PC-9 (cell line): ENCODE measurements at regions of chr1 and their contacts with region 1.

Region 1: DNA sequence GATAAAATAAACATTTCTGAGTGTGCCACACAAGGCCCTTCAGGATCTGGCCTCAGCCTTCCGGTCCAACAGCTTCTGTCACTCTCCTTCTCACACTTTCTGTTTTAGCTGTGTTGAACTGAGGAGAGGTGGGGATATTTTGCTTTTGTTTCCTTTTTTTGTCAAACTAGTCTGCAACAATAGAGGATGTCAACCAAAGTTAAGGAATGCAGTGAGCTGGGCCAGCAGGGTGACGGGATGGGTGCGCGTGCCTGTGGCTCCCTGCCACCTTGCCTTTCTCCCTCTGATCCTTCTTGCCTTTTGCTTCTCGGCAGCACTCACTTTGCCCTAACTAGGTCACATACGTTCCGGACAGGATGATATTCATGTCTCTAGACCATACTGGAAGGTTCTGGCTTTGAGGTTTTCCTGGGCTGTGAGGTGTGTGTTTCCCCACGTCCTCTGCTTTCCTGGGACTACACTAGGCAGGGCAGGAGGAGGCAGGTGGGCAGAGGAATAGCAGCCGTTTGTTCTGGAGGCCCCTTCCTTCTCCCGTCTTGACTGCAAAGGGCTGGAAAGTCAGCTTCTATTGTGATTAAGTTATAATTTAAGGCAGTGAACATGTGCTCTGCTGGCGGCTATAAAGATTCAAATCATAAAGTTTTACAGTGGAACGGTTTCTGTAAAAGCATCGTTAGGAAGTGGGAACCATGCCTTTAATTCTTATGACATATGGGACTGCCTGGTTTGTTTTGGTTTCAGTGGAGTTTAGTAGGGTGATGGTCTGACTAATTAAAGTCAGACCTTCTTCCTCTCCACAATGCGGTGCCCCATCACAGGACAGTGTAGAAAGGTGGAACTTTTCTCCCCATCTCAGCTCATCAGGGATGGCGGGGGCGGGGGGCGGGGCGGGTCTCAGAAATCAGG is 67.8 kb downstream of the RNF220 start:
- DNase-seq: peak in 1 of 2 experiments; percentile 26
- H3K4me3 ChIP-seq: no peak overlapping the region
- H3K27ac ChIP-seq: no peak overlapping the region
- H3K4me1 ChIP-seq: no peaks in the 10 kb centered on the region
- H3K27me3 ChIP-seq: no peaks in the 10 kb centered on the region
- CTCF ChIP-seq: no peak

Region 2: GRCh38 chr1:44405041-44405797 is 67.7 kb before region 1 on chr1 and contains the start of gene RNF220:
- CTCF ChIA-PET with region 1: no interaction called
- POLR2A ChIA-PET with region 1: interaction called, 14 read pairs
- intact Hi-C with region 1: no loop called
- DNase-seq: peak; percentile 46 to 61
- H3K4me3 ChIP-seq: peak within 1 kb of the TSS; percentile 68
- H3K27ac ChIP-seq: no peak within 1 kb of the TSS
- H3K4me1 ChIP-seq: no peaks in the 10 kb centered on the region; the same call in 1 of the 2 replicates
- H3K27me3 ChIP-seq: no peaks in the 10 kb centered on the region
- CTCF ChIP-seq: no peak
- total RNA-seq, gene RNF220: 82.9 and 86.3 TPM in 2 replicates

Region 3: GRCh38 chr1:44500181-44501046 is 27.5 kb after region 1 on chr1:
- CTCF ChIA-PET with region 1: no interaction called
- POLR2A ChIA-PET with region 1: interaction called, 10 read pairs
- intact Hi-C with region 1: no loop called
- DNase-seq: no peak
- H3K4me3 ChIP-seq: no peak overlapping the region
- H3K27ac ChIP-seq: no peak overlapping the region
- H3K4me1 ChIP-seq: no peaks in the 10 kb centered on the region
- H3K27me3 ChIP-seq: no peaks in the 10 kb centered on the region
- CTCF ChIP-seq: no peak